ENCODE measurements at regions of chr2 and their contacts with region 1.

Region 1: GRCh38 chr2:143259368-143259958 is 130.2 kb downstream of the ARHGAP15 start:
- DNase-seq: peak in 7 of 10 donors; percentile 47 to 85 (median 56)
- H3K4me3 ChIP-seq: peak overlapping the region in 35 of 59 donors; percentile 5 to 53 (median 30)
- H3K27ac ChIP-seq: no peak overlapping the region
- H3K27me3 ChIP-seq: peaks cover 0 to 2% (median 0%) of the 10 kb centered on the region in 45 donors
- CTCF ChIP-seq: peak; percentile 65 to 96 (median 80)

Region 2: DNA sequence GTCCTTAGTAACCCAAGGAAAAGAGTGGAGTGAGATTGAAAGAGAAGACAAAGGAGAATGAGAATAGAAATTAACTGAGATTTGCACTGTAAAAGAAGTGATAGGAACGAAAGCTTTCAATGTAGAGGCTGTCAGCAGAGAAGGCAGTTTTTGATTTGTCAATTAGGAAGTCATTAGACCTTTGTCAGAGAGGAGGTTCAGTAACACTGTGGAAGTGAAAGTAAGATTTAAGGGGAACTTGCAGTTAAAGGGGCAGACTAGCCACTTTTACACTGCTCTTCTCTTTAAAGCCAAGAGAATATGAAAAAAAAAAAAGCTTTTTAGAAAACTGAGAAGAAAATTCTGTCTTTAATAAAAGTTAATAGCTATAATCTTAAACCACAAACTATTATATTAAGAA is 393.5 kb before region 1 on chr2:
- intact Hi-C with region 1: no loop called
- DNase-seq: no peak
- H3K4me3 ChIP-seq: peak overlapping the region in 5 of 59 donors; percentile 0 to 19 (median 12)
- H3K27ac ChIP-seq: peak overlapping the region in 1 of 59 donors; percentile 16
- H3K27me3 ChIP-seq: no peaks in the 10 kb centered on the region
- CTCF ChIP-seq: no peak

Region 3: DNA sequence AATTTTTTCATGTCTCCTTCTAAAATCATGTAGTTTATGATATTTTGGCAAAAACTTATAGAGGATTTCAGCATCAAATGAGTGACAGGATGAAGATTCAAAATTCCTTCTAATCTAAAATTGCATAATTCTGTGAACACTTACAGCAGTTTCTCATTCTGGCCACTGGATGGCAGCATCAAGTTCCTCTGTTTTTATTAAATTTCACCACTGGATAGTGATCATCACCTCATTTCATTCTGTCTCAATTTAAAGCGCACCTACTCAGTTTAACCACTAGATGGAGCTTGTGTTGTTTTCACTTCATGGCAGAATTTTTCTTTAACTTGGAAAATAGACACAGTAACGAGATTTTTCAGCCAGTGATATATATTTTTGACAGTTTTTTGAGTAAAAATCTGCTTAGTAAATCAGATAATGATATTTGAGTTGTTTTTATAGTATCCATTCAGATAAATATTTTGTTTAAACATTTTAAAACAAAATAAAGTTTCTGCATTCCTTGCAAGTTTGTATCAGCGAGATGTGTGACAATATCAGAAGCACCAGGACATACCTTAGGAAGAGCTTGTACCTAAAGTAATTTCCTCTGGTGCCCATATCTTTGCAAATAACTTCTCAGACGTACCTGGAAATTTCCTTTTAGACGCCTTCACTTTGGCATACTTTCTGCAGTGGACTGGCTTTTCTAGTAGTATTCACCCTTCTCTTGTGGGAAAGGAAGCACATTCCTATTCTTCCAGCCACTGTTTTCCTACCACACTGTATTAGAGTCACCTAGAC is 225.0 kb before region 1 on chr2:
- intact Hi-C with region 1: loop called in 1 of 2 experiments (anchors 10 kb)
- DNase-seq: peak in 4 of 10 donors; percentile 33 to 57 (median 38)
- H3K4me3 ChIP-seq: no peak overlapping the region
- H3K27ac ChIP-seq: no peak overlapping the region
- H3K27me3 ChIP-seq: peaks cover 0 to 8% (median 0%) of the 10 kb centered on the region in 45 donors
- CTCF ChIP-seq: peak; percentile 95 to 100 (median 100)

Region 4: DNA sequence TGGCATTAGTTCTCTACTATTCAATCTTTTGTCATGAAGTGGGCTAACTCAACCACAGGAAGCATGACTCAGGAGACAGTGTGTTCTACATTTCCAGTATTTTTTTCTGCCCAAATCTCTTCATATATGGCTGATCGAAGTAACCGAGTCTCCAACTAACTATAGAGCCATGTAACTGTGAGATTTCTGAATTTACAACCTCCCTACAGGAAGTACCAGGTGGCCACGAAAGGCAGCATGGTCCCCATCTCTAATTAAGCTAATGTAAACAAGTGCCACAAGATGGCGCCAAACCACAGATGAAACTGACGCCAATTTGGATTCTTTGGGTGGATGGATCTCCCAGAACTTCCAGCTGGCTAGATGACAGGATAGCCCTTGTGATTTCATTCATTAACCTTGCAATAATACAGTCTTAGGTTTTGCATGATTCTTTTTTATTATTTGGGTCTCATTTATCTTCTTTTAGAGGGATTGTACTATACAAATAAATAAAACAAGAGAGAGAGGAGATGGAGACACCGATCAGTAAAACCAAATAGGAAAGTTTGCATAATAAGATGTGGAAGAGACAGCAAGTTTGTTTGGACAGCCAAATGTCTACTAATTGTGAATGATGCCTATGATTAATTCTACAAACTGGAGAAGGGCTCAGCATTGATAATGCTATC is 148.6 kb before region 1 on chr2:
- intact Hi-C with region 1: loop called (anchors 2 to 5 kb)
- DNase-seq: peak in 4 of 10 donors; percentile 17 to 63 (median 40)
- H3K4me3 ChIP-seq: no peak overlapping the region
- H3K27ac ChIP-seq: no peak overlapping the region
- H3K27me3 ChIP-seq: no peaks in the 10 kb centered on the region
- CTCF ChIP-seq: peak; percentile 53 to 90 (median 72)

Region 5: GRCh38 chr2:143553261-143553660 is 293.8 kb after region 1 on chr2:
- intact Hi-C with region 1: no loop called
- DNase-seq: no peak
- H3K4me3 ChIP-seq: no peak overlapping the region
- H3K27ac ChIP-seq: no peak overlapping the region
- H3K27me3 ChIP-seq: no peaks in the 10 kb centered on the region
- CTCF ChIP-seq: no peak